ENCODE measurements at regions of chr14 and their contacts with region 1.

Region 1: GRCh38 chr14:94548999-94549985 is 11.9 kb upstream of the SERPINA4 start:
- DNase-seq: peak; percentile 65
- H3K4me3 Mint-ChIP-seq: no peak overlapping the region
- H3K27ac Mint-ChIP-seq: no peak overlapping the region
- H3K4me1 Mint-ChIP-seq: no peaks in the 10 kb centered on the region
- H3K27me3 Mint-ChIP-seq: no peaks in the 10 kb centered on the region
- CTCF ChIP-seq: peak; percentile 93

Region 2: DNA sequence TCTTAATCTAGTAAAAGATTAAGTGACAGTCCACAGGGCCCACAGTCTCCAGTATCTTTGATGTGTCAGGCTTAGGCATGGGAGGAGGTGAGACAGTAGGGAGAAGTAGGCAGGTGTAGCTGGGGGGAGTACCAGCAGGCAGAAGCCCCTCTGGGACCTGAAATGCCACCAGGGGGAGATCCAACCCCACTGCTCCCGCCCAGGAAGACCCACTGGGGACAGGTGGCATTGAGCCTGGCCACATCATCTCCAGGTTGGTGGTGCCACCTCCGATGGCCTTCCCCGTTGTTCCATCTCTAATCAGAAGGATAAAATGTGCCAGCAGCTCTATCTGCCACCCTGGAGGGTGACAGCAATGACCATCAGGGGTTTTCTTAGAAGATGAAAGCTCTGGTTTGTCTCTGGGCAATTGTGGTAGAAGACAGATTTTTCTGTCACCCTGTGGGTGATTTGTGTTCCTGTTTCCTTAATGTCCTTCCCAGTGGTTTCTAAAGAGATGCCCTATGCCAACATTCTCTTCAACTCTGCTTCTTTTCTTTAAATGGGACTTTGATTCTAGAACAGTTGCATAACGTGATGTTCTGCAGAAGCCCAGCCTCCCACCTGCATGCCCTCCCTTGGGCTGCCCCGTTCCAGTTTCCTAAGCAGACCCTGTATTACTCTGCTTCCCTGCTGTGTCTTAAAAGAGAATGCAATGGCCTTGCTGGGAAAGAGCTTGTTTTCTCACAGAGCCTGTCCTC is 27.7 kb before region 1 on chr14:
- CTCF ChIA-PET with region 1: interaction called, 12 read pairs
- POLR2A ChIA-PET with region 1: no interaction called
- intact Hi-C with region 1: no loop called
- DNase-seq: no peak
- H3K4me3 Mint-ChIP-seq: no peak overlapping the region
- H3K27ac Mint-ChIP-seq: no peak overlapping the region
- H3K4me1 Mint-ChIP-seq: no peaks in the 10 kb centered on the region
- H3K27me3 Mint-ChIP-seq: peaks cover 32% of the 10 kb centered on the region
- CTCF ChIP-seq: no peak

Region 3: GRCh38 chr14:94562941-94563883 is 13.9 kb after region 1 on chr14:
- CTCF ChIA-PET with region 1: interaction called, 32 read pairs
- POLR2A ChIA-PET with region 1: interaction called, 3 read pairs
- intact Hi-C with region 1: no loop called
- DNase-seq: no peak
- H3K4me3 Mint-ChIP-seq: no peak overlapping the region
- H3K27ac Mint-ChIP-seq: no peak overlapping the region
- H3K4me1 Mint-ChIP-seq: no peaks in the 10 kb centered on the region
- H3K27me3 Mint-ChIP-seq: no peaks in the 10 kb centered on the region
- CTCF ChIP-seq: no peak

Region 4: DNA sequence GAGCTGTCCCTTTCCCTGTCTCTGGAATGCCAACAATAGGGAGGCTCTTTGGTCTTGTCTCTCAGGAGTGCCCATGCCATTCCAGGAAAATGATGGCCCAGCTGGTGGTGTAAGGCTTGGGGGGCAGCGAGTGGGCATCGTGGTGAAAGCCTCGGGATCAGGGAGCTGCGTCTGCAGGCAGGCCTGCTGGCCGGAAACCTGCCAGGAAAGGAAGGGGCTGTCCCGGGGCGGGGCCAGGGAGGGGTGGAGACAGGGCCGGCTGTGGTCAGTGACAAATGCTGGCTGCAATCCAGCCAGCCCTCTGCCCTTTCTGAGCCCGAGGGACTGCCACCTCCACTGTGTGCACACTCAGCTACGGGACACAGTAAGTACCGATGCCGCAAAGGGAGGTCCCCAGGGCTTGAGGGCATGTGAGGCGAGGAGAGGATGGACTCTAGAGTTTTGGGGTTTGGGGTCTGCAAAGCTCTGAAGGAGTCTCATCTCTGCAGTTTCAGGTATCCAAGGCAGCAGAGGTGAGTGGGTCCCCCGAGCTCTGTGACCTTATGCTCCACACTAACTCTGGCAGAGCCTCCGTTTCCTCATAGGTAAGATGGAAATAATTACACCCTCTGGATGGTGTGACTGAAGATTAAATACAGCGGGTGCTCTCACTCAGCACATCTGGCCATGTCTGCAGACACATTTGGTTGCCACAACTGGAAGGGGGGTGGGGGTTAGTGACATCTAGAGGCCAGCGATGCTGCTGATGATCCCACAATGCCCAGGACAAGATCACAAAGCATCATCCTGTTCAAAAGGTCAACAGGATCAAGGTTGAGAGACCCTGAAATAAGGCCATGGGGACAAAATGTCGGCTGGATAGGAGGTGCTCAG is 32.1 kb after region 1 on chr14 and contains the start of gene SERPINA5:
- CTCF ChIA-PET with region 1: interaction called, 13 read pairs
- POLR2A ChIA-PET with region 1: no interaction called
- intact Hi-C with region 1: no loop called
- DNase-seq: peak; percentile 73
- H3K4me3 Mint-ChIP-seq: no peak within 1 kb of the TSS
- H3K27ac Mint-ChIP-seq: no peak within 1 kb of the TSS
- H3K4me1 Mint-ChIP-seq: peaks cover 8% of the 10 kb centered on the region
- H3K27me3 Mint-ChIP-seq: no peaks in the 10 kb centered on the region
- CTCF ChIP-seq: no peak
- total RNA-seq, gene SERPINA5: 0.35 TPM in 1 of 2 replicates, not detected in the other

Region 5: DNA sequence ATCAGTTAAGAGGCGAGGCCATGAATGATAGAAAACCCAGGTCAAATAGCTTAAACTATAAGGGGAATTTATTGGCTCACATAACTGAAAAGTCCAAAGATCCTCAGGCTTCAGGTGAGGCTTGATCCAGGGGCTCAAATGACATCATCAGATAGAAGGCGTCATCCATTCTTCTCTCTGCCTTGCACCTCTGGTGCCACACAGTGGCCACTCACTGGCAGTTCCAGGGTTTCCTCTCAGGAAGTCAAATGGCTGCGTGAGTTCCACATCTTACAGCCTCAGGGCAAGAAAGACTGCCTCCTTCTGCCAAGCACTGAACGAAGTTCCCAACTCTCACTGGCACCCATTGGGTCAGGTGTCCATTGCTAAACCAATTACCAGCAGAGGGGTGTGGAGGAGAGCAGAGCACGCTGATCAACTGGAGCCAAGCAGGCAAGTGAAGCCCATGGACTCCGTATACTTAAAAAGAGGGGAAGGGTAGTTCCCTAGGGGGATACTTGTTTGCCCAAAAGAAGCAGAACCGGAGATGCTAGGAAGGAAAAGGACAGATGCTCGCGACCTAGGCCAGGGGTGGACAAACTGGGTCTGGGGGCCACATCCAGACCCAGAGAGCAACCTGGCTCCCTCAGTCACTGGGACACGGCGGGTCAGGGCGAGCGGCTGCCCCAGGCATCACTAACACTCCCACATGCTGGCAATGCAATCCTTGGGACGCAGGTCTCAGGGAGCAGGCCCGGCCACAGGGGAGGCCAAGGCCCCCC is 132.2 kb after region 1 on chr14:
- CTCF ChIA-PET with region 1: interaction called, 5 read pairs
- POLR2A ChIA-PET with region 1: no interaction called
- intact Hi-C with region 1: loop called (anchors 1 kb)
- DNase-seq: peak; percentile 83
- H3K4me3 Mint-ChIP-seq: no peak overlapping the region
- H3K27ac Mint-ChIP-seq: no peak overlapping the region
- H3K4me1 Mint-ChIP-seq: no peaks in the 10 kb centered on the region
- H3K27me3 Mint-ChIP-seq: no peaks in the 10 kb centered on the region
- CTCF ChIP-seq: peak; percentile 79